Endothelial cell of umbilical vein (primary cell): ENCODE measurements at regions of chr2 and their contacts with region 1.

Region 1: DNA sequence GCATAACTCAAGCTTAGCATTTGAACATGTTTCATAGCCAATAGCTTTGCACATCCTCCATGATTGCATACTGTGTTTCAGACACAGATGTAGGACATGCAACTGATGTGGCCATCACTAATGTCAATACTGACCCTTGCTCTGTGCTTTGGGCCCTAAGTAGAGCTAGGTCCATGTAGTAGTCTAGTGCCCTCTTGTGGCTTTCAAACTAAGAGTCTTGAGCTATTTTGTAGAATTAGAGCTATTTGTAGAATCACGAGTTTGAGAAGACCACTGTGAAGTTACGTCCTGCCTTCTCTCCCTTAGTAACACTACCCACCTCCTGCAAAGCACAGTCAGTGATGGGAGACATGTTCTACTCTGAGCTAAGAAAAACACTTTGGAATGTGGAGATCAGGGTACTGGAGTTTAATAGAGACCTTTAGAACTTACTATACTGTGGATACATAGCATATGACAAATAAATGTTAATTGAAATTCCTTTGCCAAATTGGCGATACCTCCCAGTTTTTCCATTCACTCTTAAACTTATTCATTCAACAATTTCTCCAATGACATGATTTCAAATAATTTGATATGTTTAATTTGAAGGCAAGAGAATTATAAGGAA is 306.5 kb upstream of the TNP1 start:
- DNase-seq: peak; percentile 58
- H3K4me3 ChIP-seq: no peak overlapping the region
- H3K27ac ChIP-seq: no peak overlapping the region
- H3K4me1 ChIP-seq: peaks cover 2% of the 10 kb centered on the region
- H3K27me3 ChIP-seq: peaks cover 0 to under 1% of the 10 kb centered on the region in 2 experiments
- CTCF ChIP-seq: peak; percentile 33 to 55
- POLR2A ChIP-seq: no peak

Region 2: DNA sequence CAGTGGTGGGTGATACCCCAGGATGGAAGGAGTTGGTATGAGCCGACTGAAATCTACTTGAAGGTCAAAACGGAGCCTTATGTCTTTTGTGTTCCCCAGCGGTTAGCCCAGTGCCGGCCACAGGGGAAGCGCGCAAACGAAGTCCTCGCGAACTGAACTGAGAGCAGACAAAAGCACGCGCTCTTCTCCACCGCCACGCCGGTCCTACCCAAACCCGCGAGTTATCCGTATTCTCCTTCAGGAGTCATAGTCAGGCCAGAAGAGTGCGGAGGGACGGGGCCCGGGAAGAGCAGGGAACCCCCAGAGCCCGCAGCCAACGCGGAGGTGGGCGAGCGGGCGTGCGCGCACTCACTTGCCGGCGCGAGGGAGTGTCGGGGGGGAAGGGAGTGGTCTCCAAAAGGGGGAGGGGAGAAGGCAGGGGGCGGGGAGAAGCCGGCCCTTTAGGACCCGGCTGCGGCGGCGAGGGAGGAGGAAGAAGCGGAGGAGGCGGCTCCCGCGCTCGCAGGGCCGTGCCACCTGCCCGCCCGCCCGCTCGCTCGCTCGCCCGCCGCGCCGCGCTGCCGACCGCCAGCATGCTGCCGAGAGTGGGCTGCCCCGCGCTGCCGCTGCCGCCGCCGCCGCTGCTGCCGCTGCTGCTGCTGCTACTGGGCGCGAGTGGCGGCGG is 533.3 kb before region 1 on chr2 and contains the start of gene IGFBP2:
- CTCF ChIA-PET with region 1: no interaction called
- POLR2A ChIA-PET with region 1: no interaction called
- dilution Hi-C with region 1: no loop called
- intact Hi-C with region 1: no loop called
- DNase-seq: peak; percentile 56
- H3K4me3 ChIP-seq: peak within 1 kb of the TSS; percentile 52 to 79 (median 59)
- H3K27ac ChIP-seq: no peak within 1 kb of the TSS
- H3K4me1 ChIP-seq: peaks cover 30% of the 10 kb centered on the region
- H3K27me3 ChIP-seq: peaks cover 6 to 9% of the 10 kb centered on the region in 2 experiments
- CTCF ChIP-seq: no peak
- POLR2A ChIP-seq: no peak
- total RNA-seq, gene IGFBP2: 212 and 229 TPM in 2 replicates

Region 3: GRCh38 chr2:216680951-216681629 is 485.3 kb before region 1 on chr2:
- CTCF ChIA-PET with region 1: interaction called, 20 read pairs
- POLR2A ChIA-PET with region 1: no interaction called
- dilution Hi-C with region 1: no loop called
- intact Hi-C with region 1: loop called (anchors 1 kb)
- DNase-seq: no peak
- H3K4me3 ChIP-seq: no peak overlapping the region
- H3K27ac ChIP-seq: no peak overlapping the region
- H3K4me1 ChIP-seq: no peaks in the 10 kb centered on the region
- H3K27me3 ChIP-seq: peaks cover 0 to 13% of the 10 kb centered on the region in 2 experiments
- CTCF ChIP-seq: no peak
- POLR2A ChIP-seq: no peak

Region 4: DNA sequence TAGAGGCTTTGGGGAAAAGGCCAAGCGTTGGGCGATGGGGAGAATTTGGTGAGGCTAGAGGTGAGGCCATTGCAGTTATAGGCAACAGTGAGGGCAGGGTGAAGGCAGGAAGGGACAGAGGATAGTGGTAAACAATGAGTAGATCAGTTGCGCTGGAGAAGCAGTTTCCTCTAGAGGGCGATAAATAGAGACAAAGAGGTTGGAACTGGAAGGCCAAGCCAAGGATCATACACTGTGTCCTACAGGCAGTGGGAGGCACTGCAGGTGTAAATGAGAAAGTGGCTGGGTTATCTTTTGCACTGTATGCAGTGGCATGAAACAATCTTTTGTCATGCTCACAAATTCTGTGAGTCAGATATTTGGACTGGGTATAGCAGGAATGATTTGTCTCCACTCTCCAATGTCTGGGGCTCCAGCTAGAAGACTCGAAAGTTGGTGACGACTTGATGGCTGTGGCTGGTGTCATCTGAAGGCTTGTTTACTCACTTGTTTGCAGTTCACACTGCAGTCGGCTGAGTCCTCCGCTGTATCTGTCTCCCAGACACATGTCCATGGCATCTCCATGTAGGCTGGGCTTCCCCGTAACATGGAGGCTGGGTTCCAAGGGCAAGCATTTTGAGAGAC is 388.6 kb before region 1 on chr2:
- CTCF ChIA-PET with region 1: interaction called, 8 read pairs
- POLR2A ChIA-PET with region 1: no interaction called
- dilution Hi-C with region 1: no loop called
- intact Hi-C with region 1: loop called (anchors 1 kb)
- DNase-seq: peak; percentile 33
- H3K4me3 ChIP-seq: no peak overlapping the region
- H3K27ac ChIP-seq: no peak overlapping the region
- H3K4me1 ChIP-seq: no peaks in the 10 kb centered on the region
- H3K27me3 ChIP-seq: no peaks in the 10 kb centered on the region
- CTCF ChIP-seq: peak; percentile 71 to 80
- POLR2A ChIP-seq: no peak

Region 5: DNA sequence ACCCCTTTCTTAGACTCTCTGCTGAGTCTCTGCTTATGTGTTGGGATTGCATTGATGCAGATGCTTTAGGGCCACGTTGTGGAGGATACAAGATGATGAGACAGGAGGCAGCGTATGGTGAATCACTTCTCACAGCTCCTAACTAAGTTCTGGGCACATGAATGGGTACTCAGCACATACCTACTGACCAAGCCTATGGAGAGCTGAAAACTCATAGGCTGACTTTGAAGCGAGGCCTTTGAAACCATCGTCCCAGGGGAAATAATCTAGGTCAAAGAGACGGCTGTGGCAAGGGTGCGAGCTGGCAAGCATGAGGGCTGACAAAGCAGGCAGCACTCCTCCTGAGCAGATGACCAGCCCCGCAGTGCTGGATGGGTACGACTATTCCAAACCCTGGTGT is 126.2 kb before region 1 on chr2:
- CTCF ChIA-PET with region 1: interaction called, 22 read pairs
- POLR2A ChIA-PET with region 1: no interaction called
- dilution Hi-C with region 1: no loop called
- intact Hi-C with region 1: loop called (anchors 5 kb)
- DNase-seq: no peak
- H3K4me3 ChIP-seq: no peak overlapping the region
- H3K27ac ChIP-seq: no peak overlapping the region
- H3K4me1 ChIP-seq: no peaks in the 10 kb centered on the region
- H3K27me3 ChIP-seq: peaks cover 3 to 6% of the 10 kb centered on the region in 2 experiments
- CTCF ChIP-seq: no peak
- POLR2A ChIP-seq: no peak

Region 6: GRCh38 chr2:217142649-217143266 is 23.6 kb before region 1 on chr2:
- CTCF ChIA-PET with region 1: interaction called, 19 read pairs
- POLR2A ChIA-PET with region 1: no interaction called
- dilution Hi-C with region 1: no loop called
- intact Hi-C with region 1: no loop called
- DNase-seq: peak; percentile 46
- H3K4me3 ChIP-seq: no peak overlapping the region
- H3K27ac ChIP-seq: no peak overlapping the region
- H3K4me1 ChIP-seq: no peaks in the 10 kb centered on the region
- H3K27me3 ChIP-seq: peaks cover 3 to 7% of the 10 kb centered on the region in 2 experiments
- CTCF ChIP-seq: peak; percentile 66 to 73
- POLR2A ChIP-seq: no peak

Region 7: GRCh38 chr2:217489145-217489960 is 323.0 kb after region 1 on chr2:
- CTCF ChIA-PET with region 1: interaction called, 3 read pairs
- POLR2A ChIA-PET with region 1: no interaction called
- dilution Hi-C with region 1: loop called (anchors 25 kb)
- intact Hi-C with region 1: no loop called
- DNase-seq: no peak
- H3K4me3 ChIP-seq: no peak overlapping the region
- H3K27ac ChIP-seq: no peak overlapping the region
- H3K4me1 ChIP-seq: no peaks in the 10 kb centered on the region
- H3K27me3 ChIP-seq: no peaks in the 10 kb centered on the region
- CTCF ChIP-seq: no peak
- POLR2A ChIP-seq: no peak